GM12878 (cell line): ENCODE measurements at regions of chr2 and their contacts with region 1.

Region 1: GRCh38 chr2:60881047-60881932 is at the start of gene REL:
- DNase-seq: peak; percentile 59
- ATAC-seq: peak; percentile 77
- H3K4me3 ChIP-seq: peak within 1 kb of the TSS; percentile 78
- H3K27ac ChIP-seq: peak within 1 kb of the TSS; percentile 93
- H3K4me1 ChIP-seq: peaks cover 11% of the 10 kb centered on the region
- H3K27me3 ChIP-seq: no peaks in the 10 kb centered on the region
- CTCF ChIP-seq: no peak
- EP300 ChIP-seq: peak in 1 of 2 experiments; percentile 72; a peak in 2 of 4 replicates
- POLR2A ChIP-seq: peak; percentile 96
- RAD21 ChIP-seq: no peak
- polyA plus RNA-seq, gene REL: 6.3 to 17.7 TPM

Region 2: DNA sequence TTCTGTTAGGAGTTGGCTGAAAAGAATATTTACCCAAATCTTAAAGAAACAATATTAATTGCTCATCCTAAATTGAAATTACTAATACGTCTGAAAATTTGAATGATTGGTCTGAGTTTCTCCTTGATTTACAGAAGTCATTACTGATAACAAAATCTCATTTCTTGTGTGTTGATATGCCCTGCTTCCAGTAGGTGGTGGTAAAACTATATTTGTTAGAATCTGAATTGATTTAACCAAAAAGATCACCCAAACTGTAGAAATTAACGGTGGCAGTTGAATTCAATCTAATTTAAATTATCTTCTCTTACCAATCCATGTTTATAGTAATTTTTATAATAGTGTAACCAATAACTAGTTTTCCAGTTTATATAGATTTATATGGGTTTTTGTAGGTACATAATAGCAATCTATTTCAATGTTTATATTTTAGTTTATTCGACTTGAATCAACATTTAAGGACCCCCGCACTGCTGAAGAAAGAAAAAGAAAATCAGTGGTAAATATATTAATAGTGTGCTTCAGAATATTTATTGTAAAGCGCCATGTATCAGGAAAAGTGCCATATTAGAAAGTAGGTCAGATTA is 86.9 kb before region 1 on chr2:
- CTCF ChIA-PET with region 1: interaction called, 3 read pairs
- POLR2A ChIA-PET with region 1: interaction called, 4 read pairs
- RAD21 ChIA-PET with region 1: interaction called, 15 read pairs
- SMC1A ChIA-PET with region 1: interaction called, 10 read pairs
- in situ Hi-C with region 1: no loop called
- intact Hi-C with region 1: no loop called
- DNase-seq: no peak
- ATAC-seq: peak; percentile 51; the same call in 2 of the 3 replicates
- H3K4me3 ChIP-seq: no peak overlapping the region
- H3K27ac ChIP-seq: no peak overlapping the region
- H3K4me1 ChIP-seq: peaks cover 16% of the 10 kb centered on the region
- H3K27me3 ChIP-seq: no peaks in the 10 kb centered on the region
- CTCF ChIP-seq: peak; percentile 33 to 73 (median 55); a peak in 4 of 6 replicates
- EP300 ChIP-seq: no peak
- POLR2A ChIP-seq: no peak
- RAD21 ChIP-seq: peak; percentile 81

Region 3: DNA sequence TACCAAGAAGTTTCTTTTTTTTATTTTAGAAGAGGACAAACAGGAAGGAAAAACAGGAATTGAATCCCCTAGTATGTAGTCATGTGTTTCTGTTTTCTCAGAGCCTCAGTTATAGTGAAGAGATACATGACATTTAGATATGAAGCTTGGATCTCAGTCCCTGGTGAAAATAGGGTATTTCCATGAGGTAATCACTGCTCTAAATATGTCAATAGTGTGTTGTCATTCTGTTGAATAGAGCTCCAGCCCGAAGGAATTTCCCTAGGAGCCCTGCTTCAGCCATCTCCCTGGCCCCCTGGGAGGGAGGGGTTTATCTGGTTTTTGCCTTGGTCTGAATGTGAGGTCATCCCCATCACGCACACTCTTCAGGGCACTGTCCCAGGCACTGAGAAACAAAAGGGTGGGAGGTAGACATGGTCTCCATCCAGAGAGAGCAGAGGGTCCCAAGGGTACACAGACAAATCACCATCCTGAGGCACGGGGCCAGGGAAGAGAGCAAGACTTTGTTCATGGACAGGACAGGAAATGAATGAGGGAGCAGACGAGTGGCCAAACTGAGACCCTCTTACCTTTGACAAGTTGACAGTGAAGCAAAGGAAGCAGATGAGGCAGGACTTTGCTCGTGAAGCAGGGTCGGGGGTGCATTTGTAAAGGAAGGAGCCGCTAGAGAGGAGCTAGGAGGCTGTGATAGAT is 46.9 kb before region 1 on chr2:
- CTCF ChIA-PET with region 1: interaction called, 12 read pairs
- POLR2A ChIA-PET with region 1: interaction called, 38 read pairs
- RAD21 ChIA-PET with region 1: interaction called, 78 read pairs
- SMC1A ChIA-PET with region 1: interaction called, 112 read pairs
- in situ Hi-C with region 1: no loop called
- intact Hi-C with region 1: loop called (anchors 1 kb)
- DNase-seq: peak; percentile 63
- ATAC-seq: peak; percentile 74
- H3K4me3 ChIP-seq: no peak overlapping the region
- H3K27ac ChIP-seq: peak overlapping the region; percentile 63
- H3K4me1 ChIP-seq: peaks cover 68% of the 10 kb centered on the region
- H3K27me3 ChIP-seq: no peaks in the 10 kb centered on the region
- CTCF ChIP-seq: no peak
- EP300 ChIP-seq: peak; percentile 47 to 79; a peak in 2 of 4 replicates
- POLR2A ChIP-seq: no peak
- RAD21 ChIP-seq: peak; percentile 16; the same call in 1 of the 2 replicates

Region 4: DNA sequence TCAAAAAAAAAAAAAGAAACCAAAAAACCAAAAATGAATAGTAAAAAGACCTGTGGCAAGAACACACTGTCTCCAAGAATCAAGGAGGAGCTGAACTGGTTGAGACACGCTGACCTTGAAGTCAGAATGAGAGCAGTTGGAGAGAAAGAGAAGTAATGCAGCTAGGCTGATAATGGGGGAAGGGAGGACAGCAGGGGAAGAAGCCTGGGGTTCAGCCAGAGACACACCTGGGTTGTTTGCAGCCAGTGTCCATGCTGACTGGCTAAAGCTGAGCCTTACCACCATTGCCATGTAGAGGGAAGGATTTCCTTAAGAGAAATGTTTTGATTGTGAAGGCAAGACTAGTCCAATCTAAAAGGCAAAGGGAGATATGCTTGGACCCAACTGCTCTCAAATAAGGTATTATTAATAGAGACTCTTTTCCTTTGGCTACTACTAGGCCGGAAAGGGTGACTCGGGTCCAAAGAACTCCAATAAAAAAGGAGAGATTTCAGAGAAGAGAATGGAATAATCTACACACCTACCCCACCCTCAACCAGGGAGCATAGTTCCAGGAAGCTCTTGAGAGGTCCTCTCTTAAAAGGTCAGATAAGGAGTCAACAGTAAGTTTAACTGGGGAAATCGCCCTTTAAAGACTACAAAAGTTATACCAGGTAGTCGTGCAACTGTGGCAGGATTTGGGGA is 25.2 kb before region 1 on chr2:
- CTCF ChIA-PET with region 1: no interaction called
- POLR2A ChIA-PET with region 1: no interaction called
- RAD21 ChIA-PET with region 1: no interaction called
- SMC1A ChIA-PET with region 1: no interaction called
- in situ Hi-C with region 1: no loop called
- intact Hi-C with region 1: no loop called
- DNase-seq: no peak
- ATAC-seq: no peak
- H3K4me3 ChIP-seq: no peak overlapping the region
- H3K27ac ChIP-seq: no peak overlapping the region
- H3K4me1 ChIP-seq: no peaks in the 10 kb centered on the region
- H3K27me3 ChIP-seq: no peaks in the 10 kb centered on the region
- CTCF ChIP-seq: no peak
- EP300 ChIP-seq: no peak
- POLR2A ChIP-seq: no peak
- RAD21 ChIP-seq: no peak

Region 5: GRCh38 chr2:60899230-60899891 is 18.1 kb after region 1 on chr2:
- CTCF ChIA-PET with region 1: interaction called, 6 read pairs
- POLR2A ChIA-PET with region 1: interaction called, 9 read pairs
- RAD21 ChIA-PET with region 1: interaction called, 14 read pairs
- SMC1A ChIA-PET with region 1: interaction called, 14 read pairs
- in situ Hi-C with region 1: no loop called
- intact Hi-C with region 1: no loop called
- DNase-seq: peak; percentile 37
- ATAC-seq: peak; percentile 68
- H3K4me3 ChIP-seq: no peak overlapping the region
- H3K27ac ChIP-seq: peak overlapping the region; percentile 47
- H3K4me1 ChIP-seq: peaks cover 13% of the 10 kb centered on the region
- H3K27me3 ChIP-seq: no peaks in the 10 kb centered on the region
- CTCF ChIP-seq: no peak
- EP300 ChIP-seq: peak; percentile 77 to 82
- POLR2A ChIP-seq: peak; percentile 32; the same call in 1 of the 2 replicates
- RAD21 ChIP-seq: no peak

Region 6: DNA sequence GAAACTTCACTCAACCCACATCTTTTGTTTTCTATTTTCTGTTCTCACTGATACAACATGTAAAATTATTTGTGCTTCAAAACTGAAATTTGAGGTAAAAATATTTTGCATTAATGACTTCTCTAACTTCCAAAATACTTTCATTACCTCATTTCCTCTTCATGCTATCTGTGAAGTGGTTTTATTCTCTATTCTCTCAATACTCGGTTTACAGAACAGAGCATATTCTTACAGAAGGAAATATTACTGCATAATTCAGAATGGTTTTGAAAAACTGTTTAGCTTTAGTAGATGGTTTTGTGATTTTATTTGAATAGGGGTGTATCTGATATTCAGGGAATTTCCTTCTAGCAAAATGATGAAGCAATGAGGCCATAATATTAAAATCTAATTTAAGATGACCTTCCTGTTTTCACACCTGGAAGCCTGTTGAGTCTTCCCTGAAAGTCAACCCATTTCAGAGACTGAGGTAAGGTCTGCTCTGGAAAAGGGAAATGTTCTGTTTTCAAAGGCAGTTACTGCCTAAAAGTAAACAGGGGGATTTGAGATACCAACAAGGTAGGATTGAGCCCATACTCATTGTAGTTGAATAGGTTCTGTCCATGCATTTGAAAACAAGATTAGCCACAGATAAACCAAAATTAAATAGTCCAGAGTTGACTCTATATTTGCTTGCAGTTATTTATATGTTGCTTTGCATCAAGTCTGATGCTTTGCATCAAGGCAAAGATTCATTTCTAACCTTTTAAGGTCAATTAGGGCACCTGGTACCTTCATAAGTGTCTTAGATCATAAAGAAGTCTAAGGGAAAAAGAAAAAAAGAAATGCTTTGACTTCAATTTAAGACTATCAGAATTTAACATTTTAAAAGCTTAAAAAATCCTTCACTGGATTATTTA is 85.5 kb after region 1 on chr2:
- CTCF ChIA-PET with region 1: interaction called, 6 read pairs
- POLR2A ChIA-PET with region 1: interaction called, 9 read pairs
- RAD21 ChIA-PET with region 1: interaction called, 30 read pairs
- SMC1A ChIA-PET with region 1: interaction called, 23 read pairs
- in situ Hi-C with region 1: no loop called
- intact Hi-C with region 1: loop called (anchors 2 kb)
- DNase-seq: peak; percentile 52
- ATAC-seq: peak; percentile 81
- H3K4me3 ChIP-seq: peak overlapping the region; percentile 41; the same call in 1 of the 2 replicates
- H3K27ac ChIP-seq: peak overlapping the region; percentile 92
- H3K4me1 ChIP-seq: peaks cover 35% of the 10 kb centered on the region
- H3K27me3 ChIP-seq: no peaks in the 10 kb centered on the region
- CTCF ChIP-seq: no peak
- EP300 ChIP-seq: peak; percentile 77 to 79; a peak in 3 of 4 replicates
- POLR2A ChIP-seq: no peak
- RAD21 ChIP-seq: no peak

Region 7: DNA sequence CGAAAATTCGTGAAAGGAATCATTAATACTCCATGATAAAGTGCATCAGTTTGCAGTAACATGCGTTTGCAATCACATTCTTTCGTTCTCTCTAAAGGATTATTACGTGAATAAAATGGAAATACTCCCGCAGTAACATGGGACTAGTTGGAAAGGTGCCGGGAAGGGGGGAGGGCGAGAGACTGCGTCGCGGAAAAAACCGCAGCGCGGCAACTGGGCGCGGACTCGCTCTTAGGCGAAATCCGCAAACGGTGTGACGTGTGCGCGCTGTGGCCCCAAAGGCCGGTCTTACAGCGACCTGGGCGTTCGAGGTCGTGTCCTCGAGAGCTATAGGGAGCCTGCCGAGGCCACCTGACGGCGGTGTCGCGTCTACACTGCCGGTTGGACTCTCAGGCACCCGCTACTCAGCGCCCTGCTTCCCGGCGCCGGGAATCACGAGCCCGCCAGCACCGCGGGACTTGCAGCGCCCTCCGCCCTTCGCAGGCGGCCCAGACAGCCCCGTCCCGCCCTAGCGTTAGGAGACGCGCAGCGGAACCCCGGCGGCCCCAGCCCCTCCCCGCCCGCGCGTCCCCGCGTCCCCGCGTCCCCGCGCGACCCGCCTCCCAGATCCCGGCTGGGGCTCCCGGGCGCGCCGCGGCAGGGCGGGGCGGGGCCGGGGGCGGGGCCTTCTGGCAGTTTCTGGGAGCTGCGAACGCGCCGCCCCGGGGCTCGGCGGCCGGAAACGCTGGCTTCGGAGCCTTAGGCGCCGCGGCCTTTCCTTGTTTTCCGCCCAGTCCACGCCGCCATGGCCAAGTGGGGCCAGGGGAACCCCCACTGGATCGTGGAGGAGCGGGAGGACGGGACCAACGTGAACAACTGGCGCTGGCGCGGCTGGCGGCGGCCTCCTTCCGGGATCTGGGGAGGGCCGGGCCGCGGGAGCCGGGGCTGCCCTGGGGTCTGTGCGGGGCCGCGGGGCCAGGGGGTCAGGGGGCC is 295.8 kb after region 1 on chr2:
- CTCF ChIA-PET with region 1: no interaction called
- POLR2A ChIA-PET with region 1: no interaction called
- RAD21 ChIA-PET with region 1: interaction called, 3 read pairs
- SMC1A ChIA-PET with region 1: interaction called, 3 read pairs
- in situ Hi-C with region 1: no loop called
- intact Hi-C with region 1: loop called (anchors 5 kb)
- DNase-seq: peak; percentile 40
- ATAC-seq: peak; percentile 84
- H3K4me3 ChIP-seq: peak overlapping the region; percentile 99
- H3K27ac ChIP-seq: peak overlapping the region; percentile 91
- H3K4me1 ChIP-seq: peaks cover 14% of the 10 kb centered on the region
- H3K27me3 ChIP-seq: no peaks in the 10 kb centered on the region
- CTCF ChIP-seq: peak in 2 of 3 experiments; percentile 7 to 12; a peak in 1 of 6 replicates
- EP300 ChIP-seq: no peak
- POLR2A ChIP-seq: peak; percentile 95
- RAD21 ChIP-seq: no peak